Activated naive CD8-positive, alpha-beta T cell treated with anti-CD3 and anti-CD28 coated beads, Interleukin-2, amount 10 ng/mL, durations not matched to agents 7 days and 5 days (primary cell): ENCODE measurements at regions of chr19 and their contacts with region 1.

Region 1: GRCh38 chr19:8321060-8321985 is at the starts of genes NDUFA7 and RPS28:
- DNase-seq: peak; percentile 98
- ATAC-seq: peak; percentile 89
- H3K4me3 Mint-ChIP-seq: peak within 1 kb of the TSS; percentile 99
- H3K27ac Mint-ChIP-seq: peak within 1 kb of the TSS; percentile 100
- H3K4me1 Mint-ChIP-seq: peaks cover 30% of the 10 kb centered on the region
- H3K27me3 Mint-ChIP-seq: no peaks in the 10 kb centered on the region
- total RNA-seq, gene NDUFA7: 53.8 to 59.0 TPM
- total RNA-seq, gene RPS28: 1,838 to 1,917 TPM

Region 2: GRCh38 chr19:8307965-8308866 is 13.1 kb before region 1 on chr19 and contains the start of gene CD320:
- POLR2A ChIA-PET with region 1: interaction called, 12 read pairs
- DNase-seq: peak; percentile 94
- ATAC-seq: peak; percentile 90
- H3K4me3 Mint-ChIP-seq: peak within 1 kb of the TSS; percentile 95
- H3K27ac Mint-ChIP-seq: peak within 1 kb of the TSS; percentile 93
- H3K4me1 Mint-ChIP-seq: peaks cover 23% of the 10 kb centered on the region
- H3K27me3 Mint-ChIP-seq: no peaks in the 10 kb centered on the region
- total RNA-seq, gene CD320: 36.1 to 38.4 TPM

Region 3: GRCh38 chr19:8334458-8335342 is 13.4 kb after region 1 on chr19:
- POLR2A ChIA-PET with region 1: interaction called, 15 read pairs
- DNase-seq: peak; percentile 75
- ATAC-seq: peak; percentile 55
- H3K4me3 Mint-ChIP-seq: peak overlapping the region; percentile 13
- H3K27ac Mint-ChIP-seq: no peak overlapping the region
- H3K4me1 Mint-ChIP-seq: peaks cover 9% of the 10 kb centered on the region
- H3K27me3 Mint-ChIP-seq: peaks cover 44% of the 10 kb centered on the region

Region 4: DNA sequence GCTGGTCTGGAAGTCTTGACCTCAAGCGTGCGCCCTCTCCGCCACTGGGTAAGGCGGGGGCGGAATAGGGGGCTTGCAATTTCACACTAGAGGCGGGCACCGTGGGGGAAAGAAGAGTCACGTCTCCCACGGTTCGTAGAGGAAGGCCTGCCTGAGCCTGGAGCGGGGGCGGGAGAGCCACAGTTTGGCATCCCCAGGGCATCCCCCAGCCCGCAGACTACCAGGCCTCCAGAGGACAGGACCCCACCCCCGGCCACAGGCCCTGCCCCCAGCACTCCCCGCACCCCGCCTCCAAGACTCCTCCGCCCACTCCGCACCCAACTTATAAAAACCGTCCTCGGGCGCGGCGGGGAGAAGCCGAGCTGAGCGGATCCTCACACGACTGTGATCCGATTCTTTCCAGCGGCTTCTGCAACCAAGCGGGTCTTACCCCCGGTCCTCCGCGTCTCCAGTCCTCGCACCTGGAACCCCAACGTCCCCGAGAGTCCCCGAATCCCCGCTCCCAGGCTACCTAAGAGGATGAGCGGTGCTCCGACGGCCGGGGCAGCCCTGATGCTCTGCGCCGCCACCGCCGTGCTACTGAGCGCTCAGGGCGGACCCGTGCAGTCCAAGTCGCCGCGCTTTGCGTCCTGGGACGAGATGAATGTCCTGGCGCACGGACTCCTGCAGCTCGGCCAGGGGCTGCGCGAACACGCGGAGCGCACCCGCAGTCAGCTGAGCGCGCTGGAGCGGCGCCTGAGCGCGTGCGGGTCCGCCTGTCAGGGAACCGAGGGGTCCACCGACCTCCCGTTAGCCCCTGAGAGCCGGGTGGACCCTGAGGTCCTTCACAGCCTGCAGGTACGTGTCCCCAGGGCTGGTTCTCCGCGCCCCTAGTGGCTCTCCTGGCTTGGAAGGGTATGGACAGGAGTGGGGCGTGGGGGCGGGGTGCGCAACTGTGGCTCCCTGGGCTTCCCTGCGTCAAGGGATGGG is 42.8 kb after region 1 on chr19 and contains the start of gene ANGPTL4:
- POLR2A ChIA-PET with region 1: no interaction called
- DNase-seq: peak; percentile 71
- ATAC-seq: peak; percentile 80
- H3K4me3 Mint-ChIP-seq: peak within 1 kb of the TSS; percentile 87
- H3K27ac Mint-ChIP-seq: peak within 1 kb of the TSS; percentile 76
- H3K4me1 Mint-ChIP-seq: peaks cover 13% of the 10 kb centered on the region
- H3K27me3 Mint-ChIP-seq: peaks cover 47% of the 10 kb centered on the region
- total RNA-seq, gene ANGPTL4: 0.64 TPM in 1 of 2 experiments, not detected in the other